ENCODE measurements at regions of chr3 and their contacts with region 1.

Region 1: GRCh38 chr3:17645072-17645698 is 97.2 kb downstream of the TBC1D5 start:
- DNase-seq: peak; percentile 28
- H3K4me3 ChIP-seq: no peak overlapping the region
- H3K27ac ChIP-seq: no peak overlapping the region
- H3K4me1 ChIP-seq: peaks cover 0 to 2% of the 10 kb centered on the region in 2 experiments; a peak in 2 of 4 replicates
- H3K27me3 ChIP-seq: no peaks in the 10 kb centered on the region
- CTCF ChIP-seq: peak; percentile 80
- EP300 ChIP-seq: no peak
- RAD21 ChIP-seq: peak; percentile 70

Region 2: DNA sequence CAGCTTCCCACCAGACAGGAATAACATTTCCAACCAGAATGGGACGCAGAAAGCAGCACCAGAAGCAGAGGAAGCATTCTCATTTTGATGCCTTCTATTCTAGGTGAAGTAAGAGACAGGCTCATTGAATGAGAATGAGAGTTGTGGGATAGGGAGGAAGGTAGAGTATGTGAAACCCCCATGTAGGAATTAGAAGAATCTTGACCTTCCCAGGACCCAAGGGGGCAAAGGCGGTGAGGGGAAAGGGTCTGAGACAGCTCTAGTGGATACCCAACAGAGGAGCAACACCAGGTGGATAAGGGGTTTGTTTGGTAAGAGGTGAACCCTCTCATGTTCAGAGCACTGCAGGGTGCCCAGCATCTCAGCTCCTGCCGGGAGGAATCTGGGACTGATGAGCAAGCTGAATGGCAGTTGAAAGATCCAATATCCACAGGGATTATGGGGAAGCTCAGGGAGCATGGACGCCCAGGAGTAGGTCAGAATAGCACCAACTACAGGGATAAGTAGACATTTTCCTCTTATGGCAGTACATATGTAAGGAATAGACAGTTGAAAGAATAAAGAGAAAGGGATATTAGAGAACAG is 683.5 kb before region 1 on chr3:
- CTCF ChIA-PET with region 1: no interaction called
- POLR2A ChIA-PET with region 1: no interaction called
- DNase-seq: no peak
- H3K4me3 ChIP-seq: no peak overlapping the region
- H3K27ac ChIP-seq: no peak overlapping the region
- H3K4me1 ChIP-seq: no peaks in the 10 kb centered on the region
- H3K27me3 ChIP-seq: no peaks in the 10 kb centered on the region
- CTCF ChIP-seq: no peak
- EP300 ChIP-seq: no peak
- RAD21 ChIP-seq: no peak

Region 3: GRCh38 chr3:17431004-17431403 is 214.2 kb before region 1 on chr3:
- CTCF ChIA-PET with region 1: interaction called, 10 read pairs
- POLR2A ChIA-PET with region 1: no interaction called
- DNase-seq: peak; percentile 38
- H3K4me3 ChIP-seq: no peak overlapping the region
- H3K27ac ChIP-seq: peak overlapping the region in 1 of 2 experiments; percentile 47; a peak in 1 of 4 replicates
- H3K4me1 ChIP-seq: peaks cover 4 to 8% of the 10 kb centered on the region in 2 experiments; a peak in 2 of 4 replicates
- H3K27me3 ChIP-seq: no peaks in the 10 kb centered on the region
- CTCF ChIP-seq: peak; percentile 63
- EP300 ChIP-seq: no peak
- RAD21 ChIP-seq: peak; percentile 79

Region 4: DNA sequence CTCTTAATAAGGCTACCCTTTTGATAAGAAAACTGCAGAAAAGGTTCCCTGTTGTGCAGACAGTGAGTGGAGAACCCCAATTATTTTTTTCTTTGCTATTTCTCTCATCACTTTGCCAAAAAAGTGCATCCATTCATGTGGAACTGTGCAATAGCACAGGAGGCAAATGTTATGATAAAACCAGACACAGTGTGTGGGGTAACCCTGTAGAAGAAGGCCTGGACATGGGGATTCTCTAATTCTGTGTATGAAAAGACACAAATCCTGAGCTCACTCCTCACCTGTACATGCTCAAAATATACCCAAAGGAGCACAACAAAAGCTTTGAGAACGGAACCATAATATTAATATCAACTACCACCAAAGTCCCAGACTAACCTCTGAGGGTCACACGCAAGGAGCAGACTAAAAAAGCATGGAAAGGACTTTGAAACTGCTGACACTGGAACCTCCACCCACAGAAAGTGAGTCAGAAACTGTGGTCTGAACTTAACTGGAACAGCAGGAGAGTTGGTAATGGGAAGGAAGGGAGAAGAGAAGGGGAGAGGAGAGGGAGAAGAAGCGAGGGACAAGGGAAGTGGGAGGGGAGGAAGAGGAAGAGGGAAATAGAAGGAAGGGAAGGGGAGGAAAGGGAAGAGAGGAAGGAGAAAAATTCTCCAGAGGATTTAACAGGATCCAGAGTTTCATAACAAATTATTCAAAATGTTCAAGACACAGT is 202.7 kb before region 1 on chr3:
- CTCF ChIA-PET with region 1: no interaction called
- POLR2A ChIA-PET with region 1: no interaction called
- DNase-seq: no peak
- H3K4me3 ChIP-seq: no peak overlapping the region
- H3K27ac ChIP-seq: no peak overlapping the region
- H3K4me1 ChIP-seq: no peaks in the 10 kb centered on the region
- H3K27me3 ChIP-seq: no peaks in the 10 kb centered on the region
- CTCF ChIP-seq: no peak
- EP300 ChIP-seq: no peak
- RAD21 ChIP-seq: no peak

Region 5: DNA sequence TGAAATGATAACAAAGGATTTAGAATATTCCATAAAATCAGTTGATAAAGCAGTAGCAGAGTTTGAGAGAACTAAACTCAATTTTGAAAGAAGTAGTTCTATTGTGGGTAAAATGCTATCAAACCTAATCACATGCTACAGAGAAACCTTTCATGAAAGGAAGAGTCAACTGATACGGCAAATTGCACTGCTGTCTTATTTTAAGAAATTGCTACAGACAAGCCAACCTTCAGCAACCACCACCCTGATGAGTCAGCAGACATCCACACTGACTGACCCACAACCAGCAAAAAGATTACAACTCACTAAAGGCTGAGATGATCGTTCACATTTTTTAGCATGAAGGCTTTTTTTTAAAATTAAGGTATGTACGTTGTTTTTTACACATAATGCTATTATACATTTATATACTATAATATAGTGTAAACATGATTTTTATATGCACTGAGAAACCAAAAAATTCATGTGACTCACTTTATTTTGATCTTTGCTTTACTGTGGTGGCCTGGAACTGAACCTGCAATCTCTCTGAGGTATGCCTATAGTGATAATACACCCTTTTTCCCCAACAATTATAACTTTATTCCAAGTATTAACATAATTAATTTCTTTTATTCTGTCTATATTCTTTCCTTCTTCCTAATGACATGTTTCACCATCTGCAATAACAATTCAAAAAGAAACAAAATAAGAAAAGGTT is 12.6 kb before region 1 on chr3:
- CTCF ChIA-PET with region 1: interaction called, 11 read pairs
- POLR2A ChIA-PET with region 1: no interaction called
- DNase-seq: no peak
- H3K4me3 ChIP-seq: peak overlapping the region in 1 of 2 experiments; percentile 42; a peak in 1 of 4 replicates
- H3K27ac ChIP-seq: peak overlapping the region; percentile 26 to 55; a peak in 3 of 4 replicates
- H3K4me1 ChIP-seq: peaks cover 0 to 22% of the 10 kb centered on the region in 2 experiments; a peak in 2 of 4 replicates
- H3K27me3 ChIP-seq: no peaks in the 10 kb centered on the region
- CTCF ChIP-seq: no peak
- EP300 ChIP-seq: peak in 1 of 2 experiments; percentile 17; a peak in 1 of 4 replicates
- RAD21 ChIP-seq: no peak

Region 6: DNA sequence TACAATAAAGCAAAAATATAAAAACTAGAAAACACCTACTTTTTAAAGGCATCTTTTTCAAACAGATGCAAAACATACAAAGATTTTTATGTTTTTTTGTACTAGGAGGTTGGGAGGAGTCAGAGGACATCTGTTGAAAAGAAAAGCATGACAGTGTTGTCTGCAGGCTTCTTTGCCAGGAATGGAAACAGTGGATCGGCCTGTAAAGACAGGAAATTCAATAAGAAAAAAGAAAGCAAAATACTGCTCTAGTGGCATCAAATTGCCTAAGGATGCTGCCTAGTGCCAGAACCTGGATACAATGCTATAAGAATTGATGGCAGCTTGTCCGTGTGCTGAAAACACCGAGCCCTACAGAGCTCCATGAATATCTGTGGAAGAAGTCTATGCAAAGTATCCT is 27.3 kb after region 1 on chr3:
- CTCF ChIA-PET with region 1: interaction called, 14 read pairs
- POLR2A ChIA-PET with region 1: no interaction called
- DNase-seq: peak; percentile 22
- H3K4me3 ChIP-seq: no peak overlapping the region
- H3K27ac ChIP-seq: peak overlapping the region; percentile 17 to 89; a peak in 3 of 4 replicates
- H3K4me1 ChIP-seq: peaks cover 8 to 21% of the 10 kb centered on the region in 2 experiments; a peak in 2 of 4 replicates
- H3K27me3 ChIP-seq: no peaks in the 10 kb centered on the region
- CTCF ChIP-seq: no peak
- EP300 ChIP-seq: peak in 1 of 2 experiments; percentile 52; a peak in 1 of 4 replicates
- RAD21 ChIP-seq: peak; percentile 24; the same call in 1 of the 2 replicates

Region 7: GRCh38 chr3:17841190-17841828 is 196.1 kb after region 1 on chr3:
- CTCF ChIA-PET with region 1: interaction called, 41 read pairs
- POLR2A ChIA-PET with region 1: no interaction called
- DNase-seq: peak; percentile 75
- H3K4me3 ChIP-seq: no peak overlapping the region; a peak in 1 of 4 replicates
- H3K27ac ChIP-seq: no peak overlapping the region
- H3K4me1 ChIP-seq: no peaks in the 10 kb centered on the region; a peak in 1 of 4 replicates
- H3K27me3 ChIP-seq: no peaks in the 10 kb centered on the region
- CTCF ChIP-seq: peak; percentile 94
- EP300 ChIP-seq: no peak
- RAD21 ChIP-seq: peak; percentile 99